ENCODE measurements at regions of chr3 and their contacts with region 1.

Region 1: GRCh38 chr3:63349583-63350521 is 71.7 kb downstream of the SYNPR start:
- DNase-seq: peak; percentile 24
- ATAC-seq: peak; percentile 73
- H3K4me3 ChIP-seq: no peak overlapping the region
- H3K27ac ChIP-seq: no peak overlapping the region
- H3K4me1 ChIP-seq: no peaks in the 10 kb centered on the region
- H3K27me3 ChIP-seq: peaks cover 16% of the 10 kb centered on the region; the same call in 1 of the 2 replicates
- CTCF ChIP-seq: peak; percentile 36 to 82 (median 77); a peak in 5 of 6 replicates
- POLR2A ChIP-seq: no peak
- RAD21 ChIP-seq: peak; percentile 60

Region 2: DNA sequence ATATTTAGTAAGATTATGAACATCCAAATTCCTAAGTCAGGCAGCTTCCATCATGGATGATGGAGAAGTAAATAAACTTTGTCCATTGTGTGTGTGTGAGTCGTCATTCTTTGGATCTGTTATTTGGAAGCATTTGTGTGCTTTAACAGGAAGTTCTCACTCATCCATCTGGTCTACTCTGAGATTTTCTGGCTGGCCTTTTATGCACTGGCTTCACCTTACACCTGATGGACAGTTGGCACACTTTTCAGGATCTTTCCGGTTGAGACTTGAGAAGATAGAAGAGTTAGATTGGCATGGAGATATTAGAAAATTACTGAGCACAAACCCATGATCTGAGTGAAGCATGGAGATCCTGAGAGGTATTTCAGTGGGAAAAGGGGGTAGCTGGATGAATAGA is 59.2 kb before region 1 on chr3:
- CTCF ChIA-PET with region 1: no interaction called
- POLR2A ChIA-PET with region 1: no interaction called
- RAD21 ChIA-PET with region 1: no interaction called
- intact Hi-C with region 1: no loop called
- DNase-seq: no peak
- ATAC-seq: no peak
- H3K4me3 ChIP-seq: no peak overlapping the region
- H3K27ac ChIP-seq: no peak overlapping the region
- H3K4me1 ChIP-seq: no peaks in the 10 kb centered on the region
- H3K27me3 ChIP-seq: peaks cover 6% of the 10 kb centered on the region; the same call in 1 of the 2 replicates
- CTCF ChIP-seq: no peak
- POLR2A ChIP-seq: no peak
- RAD21 ChIP-seq: no peak

Region 3: GRCh38 chr3:63807961-63808565 is 458.2 kb after region 1 on chr3:
- CTCF ChIA-PET with region 1: no interaction called
- POLR2A ChIA-PET with region 1: no interaction called
- RAD21 ChIA-PET with region 1: no interaction called
- intact Hi-C with region 1: no loop called
- DNase-seq: no peak
- ATAC-seq: no peak
- H3K4me3 ChIP-seq: no peak overlapping the region
- H3K27ac ChIP-seq: no peak overlapping the region
- H3K4me1 ChIP-seq: no peaks in the 10 kb centered on the region
- H3K27me3 ChIP-seq: no peaks in the 10 kb centered on the region
- CTCF ChIP-seq: no peak
- POLR2A ChIP-seq: no peak
- RAD21 ChIP-seq: no peak

Region 4: DNA sequence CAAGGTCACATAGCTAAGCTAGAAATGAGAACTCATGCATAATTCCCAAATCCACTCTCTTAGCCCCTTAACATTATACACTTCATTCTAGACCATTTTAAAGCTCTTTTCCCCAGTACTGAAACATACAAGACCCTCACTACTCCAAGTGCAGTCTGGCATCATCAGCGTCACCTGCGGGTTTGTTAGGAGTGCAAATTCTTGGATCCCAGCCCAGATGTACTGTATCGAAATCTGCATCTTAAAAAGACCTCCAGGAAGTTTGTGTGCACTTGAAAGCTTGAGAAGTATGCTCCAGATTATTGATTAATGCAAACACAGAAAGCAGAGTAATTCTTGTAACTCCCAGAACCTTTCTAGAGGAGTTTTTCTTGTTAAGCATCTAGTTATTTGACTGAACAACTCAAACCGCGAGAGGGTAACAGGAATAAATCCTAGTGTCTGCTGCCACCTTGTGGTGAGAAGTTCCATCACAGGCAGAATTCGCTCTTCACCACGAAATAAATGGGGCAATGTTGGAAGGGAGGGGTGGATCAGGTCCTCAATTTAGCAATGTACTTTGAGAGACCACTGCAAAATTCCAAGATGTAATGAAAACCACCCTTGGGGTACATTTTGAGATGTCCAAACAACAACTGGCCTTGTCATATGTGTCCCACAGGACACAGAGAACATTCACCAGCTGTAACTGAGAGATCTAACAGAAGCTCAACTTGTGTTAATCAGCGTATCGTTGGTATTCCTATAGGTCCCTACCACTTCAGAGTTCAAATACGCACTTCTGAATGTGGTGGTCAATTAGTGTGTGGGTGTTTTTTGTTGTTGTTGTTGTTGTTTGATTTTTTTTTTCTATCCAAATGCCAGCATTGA is 468.7 kb after region 1 on chr3:
- CTCF ChIA-PET with region 1: interaction called, 28 read pairs
- POLR2A ChIA-PET with region 1: no interaction called
- RAD21 ChIA-PET with region 1: no interaction called
- intact Hi-C with region 1: loop called (anchors 1 kb)
- DNase-seq: peak; percentile 28
- ATAC-seq: peak; percentile 75
- H3K4me3 ChIP-seq: no peak overlapping the region
- H3K27ac ChIP-seq: no peak overlapping the region
- H3K4me1 ChIP-seq: no peaks in the 10 kb centered on the region
- H3K27me3 ChIP-seq: no peaks in the 10 kb centered on the region
- CTCF ChIP-seq: peak; percentile 54 to 93 (median 64); a peak in 5 of 6 replicates
- POLR2A ChIP-seq: no peak
- RAD21 ChIP-seq: peak; percentile 77

Region 5: GRCh38 chr3:63993653-63994079 is 643.8 kb after region 1 on chr3:
- CTCF ChIA-PET with region 1: no interaction called
- POLR2A ChIA-PET with region 1: no interaction called
- RAD21 ChIA-PET with region 1: no interaction called
- intact Hi-C with region 1: loop called (anchors 2 kb)
- DNase-seq: peak; percentile 27
- ATAC-seq: peak; percentile 98
- H3K4me3 ChIP-seq: no peak overlapping the region
- H3K27ac ChIP-seq: no peak overlapping the region
- H3K4me1 ChIP-seq: no peaks in the 10 kb centered on the region
- H3K27me3 ChIP-seq: no peaks in the 10 kb centered on the region
- CTCF ChIP-seq: peak; percentile 56 to 93 (median 84)
- POLR2A ChIP-seq: no peak
- RAD21 ChIP-seq: peak; percentile 71

Region 6: DNA sequence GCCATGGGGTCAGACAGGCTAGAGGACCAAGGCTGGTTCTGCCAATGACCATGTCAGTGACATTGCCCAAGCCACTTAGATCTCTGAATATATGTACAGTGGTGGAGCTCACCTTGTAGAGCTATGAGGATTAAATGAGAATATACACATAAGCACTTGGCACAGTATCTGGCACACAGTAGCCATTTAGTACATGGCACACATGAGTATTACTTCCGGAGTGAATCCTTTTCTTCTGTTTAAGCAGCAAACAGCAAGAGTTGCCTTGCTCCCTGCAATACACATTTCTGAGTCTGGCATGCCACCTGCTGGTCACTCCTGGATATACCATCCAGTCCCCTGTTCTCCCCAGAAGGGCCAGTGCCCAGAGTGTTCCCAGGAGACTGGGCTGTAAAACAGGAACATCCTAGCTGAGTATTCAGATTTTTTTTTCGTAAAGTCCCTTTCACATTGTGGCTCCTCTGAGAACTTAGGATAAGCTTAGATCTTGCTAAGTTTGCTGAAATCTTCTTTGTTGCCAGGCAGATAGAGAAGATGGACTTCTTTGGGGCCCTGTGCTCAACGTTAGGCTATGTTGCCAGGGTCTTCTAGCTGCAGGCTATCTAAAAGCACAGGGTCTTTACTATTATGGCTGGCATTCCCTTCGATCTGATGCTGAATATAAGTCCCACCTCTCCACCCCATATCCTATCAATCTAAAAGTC is 1134.6 kb after region 1 on chr3:
- CTCF ChIA-PET with region 1: no interaction called
- POLR2A ChIA-PET with region 1: no interaction called
- RAD21 ChIA-PET with region 1: no interaction called
- intact Hi-C with region 1: loop called (anchors 1 kb)
- DNase-seq: peak; percentile 54
- ATAC-seq: peak; percentile 99
- H3K4me3 ChIP-seq: no peak overlapping the region
- H3K27ac ChIP-seq: no peak overlapping the region
- H3K4me1 ChIP-seq: no peaks in the 10 kb centered on the region
- H3K27me3 ChIP-seq: 0 out of 2 replicates have a peak, but pooled peaks cover 4% of the 10 kb centered on the region
- CTCF ChIP-seq: peak; percentile 71 to 79 (median 74)
- POLR2A ChIP-seq: no peak
- RAD21 ChIP-seq: peak; percentile 87

Measured in HCT116 (cell line).